A549 (cell line): ENCODE measurements at regions of chr11 and their contacts with region 1.

Region 1: GRCh38 chr11:11848891-11849746 is 7.3 kb downstream of the USP47 start:
- DNase-seq: peak; percentile 46 to 72
- ATAC-seq: peak; percentile 94 to 96
- H3K4me3 ChIP-seq: no peak overlapping the region
- H3K27ac ChIP-seq: no peak overlapping the region
- H3K4me1 ChIP-seq: peaks cover 51% of the 10 kb centered on the region
- CTCF ChIP-seq: peak; percentile 83
- EP300 ChIP-seq: no peak
- POLR2A ChIP-seq: no peak
- RAD21 ChIP-seq: peak; percentile 53 to 64

Region 2: DNA sequence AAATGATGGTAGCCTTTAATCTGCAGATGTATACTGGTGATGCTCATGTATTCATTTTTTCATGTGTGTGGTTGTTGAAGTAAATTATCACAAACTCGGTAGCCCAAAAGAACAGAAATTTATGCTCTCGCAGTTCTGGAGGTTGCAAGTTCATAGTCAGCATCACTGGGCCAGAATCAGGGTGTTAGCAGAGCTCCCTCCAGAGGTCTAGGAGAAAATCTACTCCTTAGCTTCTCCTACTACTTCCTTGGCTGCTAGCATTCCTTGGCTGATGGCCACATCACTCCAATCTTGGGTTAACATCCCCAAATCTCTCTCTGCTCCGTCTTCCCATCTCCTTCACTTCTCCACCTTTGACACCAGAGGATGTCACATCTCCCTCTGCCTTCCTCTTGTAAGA is 182.1 kb before region 1 on chr11:
- CTCF ChIA-PET with region 1: no interaction called
- POLR2A ChIA-PET with region 1: no interaction called
- DNase-seq: peak in 1 of 2 experiments; percentile 20
- ATAC-seq: no peak
- H3K4me3 ChIP-seq: no peak overlapping the region
- H3K27ac ChIP-seq: no peak overlapping the region
- H3K4me1 ChIP-seq: no peaks in the 10 kb centered on the region
- CTCF ChIP-seq: no peak
- EP300 ChIP-seq: no peak
- POLR2A ChIP-seq: no peak
- RAD21 ChIP-seq: peak in 1 of 2 experiments; percentile 36; a peak in 1 of 5 replicates

Region 3: GRCh38 chr11:11876458-11876857 is 27.3 kb after region 1 on chr11:
- CTCF ChIA-PET with region 1: interaction called, 18 read pairs
- POLR2A ChIA-PET with region 1: no interaction called
- DNase-seq: peak in 1 of 2 experiments; percentile 40
- ATAC-seq: peak; percentile 34 to 55; a peak in 3 of 6 replicates
- H3K4me3 ChIP-seq: no peak overlapping the region
- H3K27ac ChIP-seq: no peak overlapping the region
- H3K4me1 ChIP-seq: peaks cover 13% of the 10 kb centered on the region; the same call in 2 of the 3 replicates
- CTCF ChIP-seq: peak; percentile 25
- EP300 ChIP-seq: no peak
- POLR2A ChIP-seq: no peak
- RAD21 ChIP-seq: peak in 1 of 2 experiments; percentile 29; a peak in 2 of 5 replicates